Calu3 (cell line): ENCODE measurements at regions of chr9 and their contacts with region 1.

Region 1: GRCh38 chr9:70258692-70259511 is at the start of gene SMC5:
- DNase-seq: peak; percentile 89
- H3K4me3 Mint-ChIP-seq: peak within 1 kb of the TSS; percentile 97
- H3K27ac Mint-ChIP-seq: peak within 1 kb of the TSS; percentile 94
- H3K4me1 Mint-ChIP-seq: peaks cover 40% of the 10 kb centered on the region
- H3K27me3 Mint-ChIP-seq: no peaks in the 10 kb centered on the region
- CTCF ChIP-seq: no peak
- total RNA-seq, gene SMC5: 26.4 and 28.6 TPM in 2 replicates

Region 2: GRCh38 chr9:69759421-69760277 is 499.3 kb before region 1 on chr9 and contains the start of gene PTAR1:
- CTCF ChIA-PET with region 1: no interaction called
- intact Hi-C with region 1: loop called (anchors 5 kb)
- DNase-seq: peak; percentile 87
- H3K4me3 Mint-ChIP-seq: peak within 1 kb of the TSS; percentile 85
- H3K27ac Mint-ChIP-seq: peak within 1 kb of the TSS; percentile 83
- H3K4me1 Mint-ChIP-seq: peaks cover 15% of the 10 kb centered on the region
- H3K27me3 Mint-ChIP-seq: no peaks in the 10 kb centered on the region
- CTCF ChIP-seq: no peak
- total RNA-seq, gene PTAR1: 40.9 and 45.2 TPM in 2 replicates

Region 3: DNA sequence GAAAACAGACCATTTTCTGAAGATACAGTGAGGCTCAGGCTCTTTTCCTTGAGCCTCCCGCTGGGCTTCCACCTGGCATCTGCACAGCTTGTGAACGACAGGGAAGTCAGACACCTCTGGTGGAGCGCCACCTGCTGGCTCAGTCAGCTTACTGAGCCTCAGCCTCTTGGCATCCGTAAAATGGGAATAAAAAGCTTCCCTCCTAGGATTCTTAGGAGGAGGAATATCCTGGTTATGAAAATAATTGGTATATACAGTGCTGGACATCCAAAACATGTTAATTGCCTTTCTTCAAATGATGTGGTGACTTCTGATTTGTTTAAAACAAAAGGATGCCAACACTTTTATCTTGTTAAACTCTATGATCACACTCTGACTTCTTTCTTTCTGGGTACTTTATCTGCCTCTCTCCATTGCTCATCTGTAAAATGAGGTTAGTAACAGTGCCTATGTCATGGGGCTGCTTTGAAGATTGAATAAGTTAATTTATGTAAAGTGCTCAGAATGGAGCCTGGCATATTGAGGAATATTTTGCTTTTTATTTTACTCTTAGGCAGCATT is 147.8 kb before region 1 on chr9:
- CTCF ChIA-PET with region 1: no interaction called
- intact Hi-C with region 1: loop called (anchors 5 kb)
- DNase-seq: peak; percentile 64
- H3K4me3 Mint-ChIP-seq: no peak overlapping the region
- H3K27ac Mint-ChIP-seq: peak overlapping the region; percentile 24
- H3K4me1 Mint-ChIP-seq: peaks cover 51% of the 10 kb centered on the region
- H3K27me3 Mint-ChIP-seq: no peaks in the 10 kb centered on the region
- CTCF ChIP-seq: peak; percentile 46